Left cardiac atrium (tissue), 4 donors: ENCODE measurements at regions of chr11 and their contacts with region 1.

Region 1: GRCh38 chr11:62374801-62375200 is 37.6 kb downstream of the ASRGL1 start:
- DNase-seq: no peak
- ATAC-seq: no peak

Region 2: DNA sequence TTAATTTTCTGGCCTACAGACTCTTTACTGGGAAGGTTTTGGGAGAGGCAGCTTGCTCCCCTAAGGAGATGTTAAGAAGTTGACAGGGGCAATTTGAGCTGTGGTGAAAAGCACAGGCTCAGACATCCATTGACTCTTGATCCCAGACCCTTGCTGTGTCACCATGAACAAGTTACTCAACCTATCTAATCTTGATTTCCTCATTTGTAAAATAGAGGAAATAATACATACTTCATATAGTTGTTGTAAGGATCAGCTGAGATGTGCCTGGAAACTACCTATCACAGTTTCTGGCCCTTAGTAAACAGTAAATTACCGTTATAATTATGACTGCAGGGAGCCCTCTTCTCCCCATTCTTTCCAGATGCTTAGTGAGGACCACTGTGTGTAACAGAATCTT is 59.4 kb before region 1 on chr11:
- intact Hi-C with region 1: no loop called
- DNase-seq: no peak
- ATAC-seq: no peak

Region 3: DNA sequence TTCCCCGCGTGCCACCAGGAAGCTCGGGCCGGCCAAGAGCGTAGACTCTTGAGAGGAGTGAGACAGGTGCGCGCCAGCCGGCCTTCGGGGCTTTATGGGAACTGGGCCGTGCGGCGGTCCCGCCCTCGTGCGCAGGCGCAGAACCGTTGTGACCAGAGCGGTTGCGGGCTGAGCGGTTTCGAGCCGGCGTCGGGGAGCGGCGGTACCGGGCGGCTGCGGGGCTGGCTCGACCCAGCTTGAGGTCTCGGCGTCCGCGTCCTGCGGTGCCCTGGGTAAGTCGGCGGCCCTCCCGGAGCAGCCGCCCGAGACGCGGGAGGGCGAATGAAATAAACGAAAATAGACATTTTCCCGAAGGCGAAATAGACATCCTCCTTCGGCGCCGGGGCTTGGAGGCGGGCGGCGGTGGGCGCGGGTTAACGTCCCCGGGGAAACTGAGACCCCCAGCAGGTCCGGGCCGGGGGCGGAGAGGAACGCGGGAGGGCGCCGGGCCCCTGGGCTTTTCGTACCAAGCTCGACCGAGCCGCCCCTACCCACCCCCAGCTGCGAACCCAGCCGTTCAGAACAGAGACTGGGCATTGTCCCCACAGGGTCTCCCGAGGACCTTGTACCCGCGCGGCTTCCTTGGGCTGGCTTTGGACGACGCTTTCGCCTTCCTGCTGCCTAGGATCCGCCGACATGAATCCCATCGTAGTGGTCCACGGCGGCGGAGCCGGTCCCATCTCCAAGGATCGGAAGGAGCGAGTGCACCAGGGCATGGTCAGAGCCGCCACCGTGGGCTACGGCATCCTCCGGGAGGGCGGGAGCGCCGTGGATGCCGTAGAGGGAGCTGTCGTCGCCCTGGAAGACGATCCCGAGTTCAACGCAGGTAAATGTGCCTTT is 37.3 kb before region 1 on chr11 and contains the start of gene ASRGL1:
- intact Hi-C with region 1: loop called in 1 of 2 experiments (anchors 5 kb)
- DNase-seq: peak; percentile 90
- ATAC-seq: peak; percentile 95 to 96
- total RNA-seq, gene ASRGL1: 7.8 to 8.1 TPM

Region 4: DNA sequence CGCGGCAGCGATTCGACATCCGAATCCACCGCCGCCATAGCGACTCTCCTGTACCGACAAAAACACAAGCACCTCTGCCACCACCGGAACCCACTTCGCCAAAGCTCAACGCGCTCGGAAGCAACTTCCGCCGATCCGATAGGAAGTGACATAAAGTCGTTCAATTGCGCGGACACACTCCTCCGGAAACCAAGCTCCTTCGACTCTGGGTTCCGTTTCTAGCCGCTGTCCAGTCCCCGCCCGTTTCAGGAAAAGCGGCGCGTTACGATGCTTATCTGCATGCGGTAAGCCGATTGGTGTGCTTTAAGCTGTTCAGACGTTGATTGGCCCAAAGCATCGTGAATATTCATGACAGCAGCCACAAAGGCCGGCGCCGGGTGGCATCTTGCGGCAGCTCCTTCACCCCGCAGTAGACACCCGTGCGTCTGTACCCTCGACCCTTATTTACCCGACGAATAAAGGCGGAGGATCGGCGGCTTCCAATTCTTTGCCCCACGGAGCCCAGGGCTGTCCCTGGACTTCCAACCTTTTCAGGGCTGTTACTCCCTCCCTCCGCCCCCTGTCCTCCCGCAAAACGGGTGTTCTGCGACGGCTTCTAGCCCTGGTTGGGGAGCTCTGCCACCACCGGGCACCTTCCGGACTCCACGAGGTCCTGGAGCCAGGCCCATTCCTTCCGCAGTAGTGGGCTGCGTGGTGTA is 216.8 kb after region 1 on chr11 and contains the start of gene TUT1:
- intact Hi-C with region 1: no loop called
- DNase-seq: peak; percentile 96
- ATAC-seq: peak; percentile 96 to 97
- total RNA-seq, gene TUT1: 9.6 to 11.5 TPM